Right ventricle myocardium inferior (tissue), 1 donor: ENCODE measurements at regions of chr18 and their contacts with region 1.

Region 1: GRCh38 chr18:47748847-47749599 is 181.4 kb downstream of the SMAD2 start:
- DNase-seq: peak; percentile 93
- ATAC-seq: peak; percentile 95

Region 2: GRCh38 chr18:47100214-47100831 is 648.7 kb before region 1 on chr18:
- intact Hi-C with region 1: loop called (anchors 1 kb)
- DNase-seq: no peak
- ATAC-seq: peak; percentile 39

Region 3: DNA sequence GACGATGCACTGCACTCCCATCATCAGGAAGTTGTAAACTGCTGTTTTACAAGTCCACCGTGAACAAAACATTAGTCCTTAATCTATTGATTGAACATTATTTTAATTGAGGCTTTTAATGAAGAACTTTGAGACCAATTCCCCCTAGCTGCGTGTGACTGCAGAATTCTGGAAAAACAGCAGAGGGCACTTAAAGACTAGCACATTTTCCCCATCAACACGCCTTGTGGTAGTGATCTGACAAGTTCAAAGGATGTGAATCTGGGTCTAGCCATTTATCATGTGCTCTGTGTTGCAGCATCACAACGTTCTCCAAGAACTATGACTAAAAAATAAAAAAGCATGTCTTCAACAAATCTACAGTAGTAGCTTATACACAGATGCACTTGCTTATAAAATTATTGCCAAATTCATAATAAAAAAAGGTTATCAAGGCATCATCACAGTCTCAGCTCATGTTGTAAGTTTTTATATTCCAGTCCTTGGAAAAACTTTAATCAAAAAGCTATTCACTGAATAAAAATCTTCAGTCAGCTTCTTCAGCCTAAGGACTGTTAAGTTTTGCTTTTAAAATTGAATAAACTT is 533.4 kb before region 1 on chr18:
- intact Hi-C with region 1: loop called (anchors 1 kb)
- DNase-seq: no peak
- ATAC-seq: no peak

Region 4: DNA sequence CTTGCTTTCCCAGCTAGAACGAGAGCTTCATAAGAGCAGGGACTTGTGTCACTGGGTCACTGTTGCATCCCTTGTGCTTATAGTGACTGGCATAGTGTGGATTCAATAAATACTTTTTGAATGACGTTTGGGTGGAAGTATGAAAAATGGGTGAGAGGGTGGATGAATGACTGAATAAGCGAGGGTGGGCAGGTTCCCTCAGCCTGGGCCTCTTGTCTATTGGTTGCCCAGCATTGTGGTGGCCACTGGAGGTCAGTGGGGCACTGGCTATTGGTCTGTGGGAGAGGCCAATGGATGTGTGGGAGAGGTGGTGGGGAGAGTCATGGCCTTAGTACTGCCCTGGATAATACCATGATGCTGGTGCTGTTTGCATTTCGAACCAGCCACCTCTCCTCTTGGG is 403.7 kb before region 1 on chr18:
- intact Hi-C with region 1: loop called (anchors 5 kb)
- DNase-seq: no peak
- ATAC-seq: no peak

Region 5: DNA sequence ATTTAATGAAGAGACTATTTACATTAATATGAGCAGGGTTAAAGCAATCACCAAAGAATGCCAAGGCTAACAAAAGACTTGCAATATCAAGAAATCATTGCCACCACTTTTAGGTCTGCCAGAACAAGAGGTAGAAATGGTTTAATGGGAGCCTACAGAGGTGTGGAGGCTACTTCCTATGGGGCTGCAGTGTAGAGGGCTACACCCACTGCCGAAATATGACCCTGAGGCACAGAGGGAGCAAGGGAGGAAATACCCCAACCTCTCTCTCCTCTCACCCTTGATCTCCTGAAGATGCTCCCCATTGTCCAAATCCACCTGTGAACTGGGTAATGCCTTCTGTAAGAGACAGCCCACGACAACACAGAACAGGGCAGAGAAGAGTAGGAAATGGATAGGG is 134.0 kb before region 1 on chr18:
- intact Hi-C with region 1: no loop called
- DNase-seq: no peak
- ATAC-seq: no peak